Astrocyte of the cerebellum (primary cell): ENCODE measurements at regions of chr10 and their contacts with region 1.

Region 1: GRCh38 chr10:44660271-44660670 is 250.9 kb upstream of the TMEM72 start:
- DNase-seq: no peak
- H3K4me3 ChIP-seq: no peak overlapping the region
- CTCF ChIP-seq: no peak

Region 2: DNA sequence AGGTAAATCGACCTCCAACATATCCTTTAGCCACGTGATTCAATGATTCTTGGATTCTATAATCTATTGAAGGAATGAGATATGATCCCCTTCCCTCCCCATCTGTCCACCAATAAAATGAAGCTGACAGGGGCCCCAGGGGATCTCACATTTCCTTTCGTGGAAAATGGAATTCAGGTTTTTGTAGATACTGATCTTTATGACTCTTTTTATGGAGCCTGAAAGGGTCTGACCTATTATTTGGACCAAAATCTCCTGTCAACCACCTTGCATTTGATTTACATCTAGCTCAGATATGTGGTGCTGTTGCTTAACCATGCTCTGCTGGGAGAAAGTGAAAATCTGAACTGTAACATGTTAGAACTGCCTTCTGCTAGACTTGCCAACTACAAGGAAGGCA is 41.4 kb before region 1 on chr10:
- in situ Hi-C with region 1: no loop called
- DNase-seq: no peak
- H3K4me3 ChIP-seq: no peak overlapping the region
- CTCF ChIP-seq: no peak

Region 3: DNA sequence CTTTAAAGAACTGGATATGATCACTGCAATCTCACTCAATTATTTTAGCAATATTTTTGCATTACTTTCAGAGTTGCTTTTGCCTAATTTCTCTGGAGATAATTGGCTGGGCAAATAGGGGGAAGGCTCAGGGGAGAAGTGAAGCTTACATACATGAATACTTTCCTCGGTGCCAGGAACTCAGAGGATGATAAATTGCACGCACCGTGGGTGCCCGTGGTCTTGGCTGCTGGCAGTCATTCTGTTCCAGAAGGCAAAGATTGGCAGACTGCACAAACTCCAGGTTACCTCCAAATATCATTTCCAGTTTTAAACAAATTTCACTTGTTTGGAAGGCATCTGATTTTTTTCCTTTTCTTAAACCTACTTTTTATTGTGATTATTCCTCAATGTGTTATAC is 53.0 kb after region 1 on chr10:
- in situ Hi-C with region 1: loop called (anchors 5 kb)
- DNase-seq: no peak
- H3K4me3 ChIP-seq: no peak overlapping the region
- CTCF ChIP-seq: no peak